BJ (cell line): ENCODE measurements at regions of chr11 and their contacts with region 1.

Region 1: GRCh38 chr11:6443269-6444003 is 2.6 kb upstream of the HPX start:
- DNase-seq: no peak
- H3K4me3 ChIP-seq: no peak overlapping the region
- H3K27me3 ChIP-seq: no peaks in the 10 kb centered on the region
- CTCF ChIP-seq: peak; percentile 92

Region 2: DNA sequence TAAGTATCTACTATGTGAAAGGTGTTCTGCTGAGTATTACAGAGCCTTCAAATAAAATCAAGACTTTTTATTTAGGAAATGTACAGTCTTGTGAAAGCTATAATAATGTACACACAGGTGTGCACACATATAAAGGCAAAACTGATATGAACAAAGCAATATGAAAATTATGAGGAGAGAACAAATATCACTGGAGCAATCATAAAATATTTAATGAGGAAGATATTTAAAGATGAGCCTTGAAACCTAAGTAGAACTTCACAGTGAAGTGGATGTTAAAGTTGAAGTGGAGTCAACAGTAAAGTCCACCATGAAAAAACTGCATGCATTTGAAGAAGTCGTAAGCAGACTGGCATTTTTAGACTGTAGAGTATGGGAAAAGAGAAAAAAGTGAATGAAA is 1692.2 kb before region 1 on chr11:
- CTCF ChIA-PET with region 1: no interaction called
- POLR2A ChIA-PET with region 1: no interaction called
- DNase-seq: no peak
- H3K4me3 ChIP-seq: no peak overlapping the region
- H3K27me3 ChIP-seq: no peaks in the 10 kb centered on the region
- CTCF ChIP-seq: no peak

Region 3: GRCh38 chr11:6389921-6390724 is 53.3 kb before region 1 on chr11 and contains the start of gene SMPD1:
- CTCF ChIA-PET with region 1: interaction called, 376 read pairs
- POLR2A ChIA-PET with region 1: no interaction called
- DNase-seq: peak; percentile 34
- H3K4me3 ChIP-seq: peak within 1 kb of the TSS; percentile 76
- H3K27me3 ChIP-seq: no peaks in the 10 kb centered on the region
- CTCF ChIP-seq: no peak
- polyA plus RNA-seq, gene SMPD1: 76.1 and 118 TPM in 2 replicates

Region 4: DNA sequence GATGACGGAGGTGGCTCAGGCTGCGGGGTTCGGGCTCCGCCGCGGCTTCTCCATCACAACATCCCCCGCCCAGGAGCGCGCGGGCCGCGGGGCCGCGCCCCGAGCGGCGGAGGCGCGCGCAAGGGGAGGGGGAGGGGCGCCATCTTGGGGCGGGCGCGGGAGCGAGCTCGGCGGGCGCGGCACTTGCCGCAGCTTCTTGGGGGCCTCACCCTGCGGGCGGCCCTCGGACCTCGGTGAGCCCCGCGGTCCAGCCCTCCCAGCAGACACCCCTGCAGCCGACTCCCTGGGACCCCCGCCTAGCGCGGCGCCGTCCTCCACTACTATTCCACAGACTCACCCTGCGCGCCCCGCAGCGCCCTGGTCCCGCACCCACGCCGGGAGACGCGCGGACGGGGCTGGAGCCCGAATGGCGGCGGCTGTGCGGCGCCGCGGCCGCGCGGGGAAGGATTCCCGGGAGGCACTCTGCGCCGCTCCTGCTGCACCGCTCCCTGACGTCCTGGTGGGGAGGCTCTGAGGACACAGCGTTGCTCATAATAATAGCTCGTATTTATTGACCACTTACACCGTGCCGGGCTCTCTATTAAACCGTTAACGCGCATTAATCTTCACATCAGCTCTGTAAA is 24.3 kb before region 1 on chr11 and contains the start of gene APBB1:
- CTCF ChIA-PET with region 1: interaction called, 16 read pairs
- POLR2A ChIA-PET with region 1: no interaction called
- DNase-seq: no peak
- H3K4me3 ChIP-seq: peak within 1 kb of the TSS; percentile 87
- H3K27me3 ChIP-seq: peaks cover 4% of the 10 kb centered on the region
- CTCF ChIP-seq: peak; percentile 19; the same call in 1 of the 2 replicates
- polyA plus RNA-seq, gene APBB1: 39.5 and 62.5 TPM in 2 replicates

Region 5: GRCh38 chr11:6431861-6432260 is 11.6 kb before region 1 on chr11:
- CTCF ChIA-PET with region 1: interaction called, 42 read pairs
- POLR2A ChIA-PET with region 1: no interaction called
- DNase-seq: no peak
- H3K4me3 ChIP-seq: no peak overlapping the region
- H3K27me3 ChIP-seq: no peaks in the 10 kb centered on the region
- CTCF ChIP-seq: no peak

Region 6: GRCh38 chr11:6498121-6498520 is 54.7 kb after region 1 on chr11:
- CTCF ChIA-PET with region 1: interaction called, 13 read pairs
- POLR2A ChIA-PET with region 1: no interaction called
- DNase-seq: no peak
- H3K4me3 ChIP-seq: no peak overlapping the region
- H3K27me3 ChIP-seq: no peaks in the 10 kb centered on the region
- CTCF ChIP-seq: no peak

Region 7: DNA sequence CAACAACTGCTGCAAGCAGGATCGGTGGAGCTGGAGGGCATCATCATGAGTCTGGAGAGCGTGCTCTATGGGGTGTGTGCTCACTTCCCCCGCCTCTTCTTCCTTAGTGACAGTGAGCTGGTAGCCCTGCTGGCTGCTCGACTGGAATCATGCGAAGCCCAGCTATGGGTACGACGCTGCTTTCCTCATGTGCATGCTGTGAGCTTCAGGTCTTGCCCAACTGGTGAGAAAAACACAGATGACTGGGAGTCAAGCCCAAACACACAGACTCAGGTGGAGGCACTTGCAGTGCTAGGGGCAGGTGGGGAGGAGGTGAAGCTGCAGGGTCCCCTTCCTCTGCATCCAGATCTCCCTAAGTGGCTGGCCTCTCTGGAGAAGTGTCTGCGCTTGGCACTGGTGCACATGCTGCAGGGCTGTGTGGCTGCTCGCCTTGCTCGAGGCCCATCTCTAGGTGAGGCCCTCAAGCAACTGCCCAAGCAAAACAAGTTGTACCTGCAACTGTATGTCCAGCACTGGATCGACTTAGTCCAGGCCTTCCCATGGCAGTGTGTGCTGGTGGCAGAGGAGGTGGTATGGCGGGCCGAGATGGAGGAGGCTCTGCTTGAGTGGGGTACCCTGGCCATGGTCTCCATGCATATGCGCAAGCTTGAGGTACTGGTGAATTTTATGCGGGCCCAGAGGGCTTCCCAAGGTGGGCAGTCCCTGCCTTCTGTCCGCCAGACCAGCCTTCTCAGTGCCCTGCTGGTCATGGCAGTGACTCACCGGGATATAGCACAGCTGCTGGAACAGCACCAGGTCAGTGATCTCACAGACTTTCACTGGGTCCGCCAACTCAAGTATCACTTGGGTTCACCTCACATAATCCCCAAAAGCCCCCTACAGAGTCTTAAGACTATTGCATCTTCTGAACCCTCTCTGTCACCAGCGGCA is 101.8 kb after region 1 on chr11:
- CTCF ChIA-PET with region 1: no interaction called
- POLR2A ChIA-PET with region 1: no interaction called
- DNase-seq: no peak
- H3K4me3 ChIP-seq: no peak overlapping the region
- H3K27me3 ChIP-seq: no peaks in the 10 kb centered on the region
- CTCF ChIP-seq: no peak